Body of pancreas (tissue), 4 donors: ENCODE measurements at regions of chr6 and their contacts with region 1.

Region 1: GRCh38 chr6:43143235-43144124 is 27.6 kb upstream of the SRF start:
- DNase-seq: peak; percentile 84 to 91 (median 88)
- ATAC-seq: peak; percentile 97
- H3K4me3 ChIP-seq: no peak overlapping the region
- H3K27ac ChIP-seq: no peak overlapping the region
- H3K4me1 ChIP-seq: peaks cover 8% of the 10 kb centered on the region
- H3K27me3 ChIP-seq: no peaks in the 10 kb centered on the region
- CTCF ChIP-seq: peak; percentile 87 to 98 (median 94)
- POLR2A ChIP-seq: no peak

Region 2: DNA sequence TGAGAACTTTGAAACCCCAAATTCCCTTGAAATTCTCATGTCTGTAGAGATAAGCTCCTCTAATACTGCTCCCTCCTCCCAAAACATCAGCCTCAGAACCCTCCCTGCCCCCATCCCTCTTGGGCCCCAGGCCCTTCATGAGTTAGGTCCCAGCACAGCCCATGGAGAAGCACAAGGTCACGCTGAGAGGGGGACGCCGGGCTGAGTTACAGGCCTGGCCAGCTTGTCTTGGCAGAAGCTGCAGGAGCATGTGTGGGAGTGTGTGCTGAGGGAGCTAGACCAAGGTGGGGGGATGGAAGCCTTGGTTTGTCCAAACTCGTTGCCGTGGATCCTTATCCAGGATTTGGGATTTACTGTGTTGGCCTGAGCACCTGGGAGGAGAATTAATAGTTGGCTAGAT is 236.1 kb before region 1 on chr6:
- intact Hi-C with region 1: loop called (anchors 5 kb)
- DNase-seq: no peak
- ATAC-seq: no peak
- H3K4me3 ChIP-seq: no peak overlapping the region
- H3K27ac ChIP-seq: no peak overlapping the region
- H3K4me1 ChIP-seq: peaks cover 23% of the 10 kb centered on the region
- H3K27me3 ChIP-seq: no peaks in the 10 kb centered on the region
- CTCF ChIP-seq: no peak
- POLR2A ChIP-seq: no peak

Region 3: DNA sequence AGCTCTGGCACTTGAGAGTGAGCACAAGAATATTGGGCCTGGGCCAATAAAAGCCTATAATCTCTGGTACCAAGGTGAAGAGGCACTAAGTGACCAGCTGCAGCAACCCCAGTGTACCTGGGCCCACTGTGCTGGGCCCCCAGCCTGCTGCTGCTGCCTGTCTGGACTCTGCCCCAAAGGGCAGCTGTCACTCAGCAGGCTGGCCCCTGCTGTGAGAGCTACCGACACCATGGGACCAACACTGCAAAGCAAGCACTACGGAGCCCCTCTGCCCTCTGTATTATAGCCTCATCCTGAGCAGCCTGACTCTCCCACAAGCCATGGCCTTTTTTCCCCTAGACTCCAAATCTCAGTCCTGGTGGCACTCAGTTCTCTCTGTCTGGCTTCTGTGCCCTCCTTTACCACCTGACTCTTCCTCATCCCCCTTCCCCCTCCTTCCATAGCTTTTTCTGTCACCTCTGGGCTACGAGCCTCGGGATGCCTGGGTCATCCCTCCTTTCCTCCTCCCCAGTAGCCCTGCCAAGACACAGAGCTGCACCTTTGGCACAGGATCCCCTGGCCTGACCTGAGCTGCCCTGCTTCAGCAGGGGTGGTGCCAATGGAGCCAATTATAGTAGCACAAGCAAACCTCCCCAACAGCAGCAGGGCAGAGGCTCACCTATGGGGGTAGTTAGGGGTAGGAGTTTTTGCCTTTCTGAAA is 107.8 kb before region 1 on chr6:
- intact Hi-C with region 1: no loop called
- DNase-seq: no peak
- ATAC-seq: peak; percentile 25
- H3K4me3 ChIP-seq: no peak overlapping the region
- H3K27ac ChIP-seq: no peak overlapping the region
- H3K4me1 ChIP-seq: no peaks in the 10 kb centered on the region
- H3K27me3 ChIP-seq: no peaks in the 10 kb centered on the region
- CTCF ChIP-seq: no peak
- POLR2A ChIP-seq: no peak

Region 4: GRCh38 chr6:43070028-43070632 is 73.3 kb before region 1 on chr6:
- intact Hi-C with region 1: loop called (anchors 5 kb)
- DNase-seq: no peak
- ATAC-seq: peak; percentile 50
- H3K4me3 ChIP-seq: no peak overlapping the region
- H3K27ac ChIP-seq: no peak overlapping the region
- H3K4me1 ChIP-seq: no peaks in the 10 kb centered on the region
- H3K27me3 ChIP-seq: no peaks in the 10 kb centered on the region
- CTCF ChIP-seq: peak in 6 of 7 experiments; percentile 20 to 53 (median 34)
- POLR2A ChIP-seq: no peak

Region 5: DNA sequence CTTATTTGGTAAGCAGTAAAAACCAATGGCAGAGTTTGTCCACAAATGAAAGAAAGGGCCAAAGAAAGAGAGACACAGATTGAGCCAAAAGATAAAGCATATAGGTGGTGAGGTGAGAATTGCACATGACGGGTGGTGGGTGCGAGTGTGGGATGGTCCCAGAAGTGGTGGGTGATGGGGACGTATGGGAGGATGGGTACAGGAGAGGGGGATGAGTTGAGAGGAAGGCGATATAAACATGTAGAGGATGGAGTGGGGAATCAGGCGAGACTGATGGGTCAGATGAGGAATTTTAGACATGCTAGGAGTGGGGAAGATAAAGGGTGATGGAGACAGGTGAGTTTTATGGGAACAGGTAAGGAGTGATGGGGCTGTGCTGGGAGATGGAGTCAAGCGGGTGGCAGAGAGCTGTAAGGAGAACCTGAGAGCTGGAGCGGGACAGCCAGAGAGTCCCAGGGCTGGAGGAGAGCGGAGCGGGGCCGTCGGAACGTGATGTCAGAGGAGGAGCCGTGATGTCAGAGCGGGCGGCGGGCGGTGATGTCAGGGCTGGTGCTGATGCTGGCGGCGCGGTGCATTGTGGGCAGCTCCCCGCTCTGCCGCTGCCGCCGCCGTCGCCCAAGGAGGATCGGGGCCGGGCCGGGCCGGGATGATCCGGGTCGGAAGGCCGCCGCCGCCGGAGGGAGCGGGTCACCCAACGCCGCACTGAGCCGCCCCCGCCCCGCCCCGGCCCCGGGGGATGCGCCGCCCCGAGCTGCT is 99.6 kb after region 1 on chr6 and contains the start of gene TTBK1:
- intact Hi-C with region 1: no loop called
- DNase-seq: no peak
- ATAC-seq: no peak
- H3K4me3 ChIP-seq: no peak within 1 kb of the TSS
- H3K27ac ChIP-seq: no peak within 1 kb of the TSS
- H3K4me1 ChIP-seq: peaks cover 16% of the 10 kb centered on the region
- H3K27me3 ChIP-seq: peaks cover 0 to 6% of the 10 kb centered on the region in 2 donors
- CTCF ChIP-seq: no peak
- POLR2A ChIP-seq: no peak
- total RNA-seq, gene TTBK1: 0.26 to 0.33 TPM